SK-N-SH (cell line): ENCODE measurements at regions of chr2 and their contacts with region 1.

Region 1: DNA sequence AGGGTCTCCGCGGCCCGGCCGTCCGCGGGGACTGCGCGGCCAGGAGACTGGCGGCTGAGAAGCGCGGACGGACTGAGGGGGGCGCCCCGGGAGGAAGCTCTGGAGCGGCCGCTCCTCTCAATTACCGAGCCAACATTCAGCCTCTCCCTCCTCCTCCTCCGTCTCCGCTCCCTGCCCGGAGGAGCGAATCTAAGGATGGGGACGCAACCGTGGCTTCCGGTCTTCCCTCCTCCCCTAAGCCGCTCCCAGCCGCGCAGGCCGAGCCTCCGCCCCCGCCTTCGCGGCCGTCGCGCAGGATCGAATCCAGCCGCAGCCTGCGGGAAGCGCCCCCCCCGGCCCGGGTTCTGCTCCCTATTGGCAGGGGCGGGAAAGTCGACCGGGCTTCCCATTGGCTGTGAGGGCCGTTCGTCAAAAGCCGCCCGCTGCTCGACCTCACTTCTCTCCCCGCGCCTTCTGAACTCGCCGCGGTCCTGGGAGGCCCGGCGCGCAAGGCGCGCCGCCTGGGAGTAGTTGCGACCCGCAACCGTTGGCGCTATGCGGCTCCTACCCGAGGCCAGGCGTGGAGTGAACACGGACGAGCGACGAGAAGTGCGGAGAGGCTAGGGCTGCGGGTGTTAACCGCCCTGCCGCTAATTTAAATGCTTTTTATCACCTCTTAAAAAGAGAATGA is at the start of gene HNRNPLL:
- DNase-seq: peak; percentile 100
- H3K4me3 ChIP-seq: peak within 1 kb of the TSS; percentile 90 to 94
- H3K27ac ChIP-seq: peak within 1 kb of the TSS; percentile 92 to 96
- H3K4me1 ChIP-seq: peaks cover 9 to 19% of the 10 kb centered on the region in 2 experiments
- H3K27me3 ChIP-seq: no peaks in the 10 kb centered on the region
- CTCF ChIP-seq: peak; percentile 19
- EP300 ChIP-seq: peak; percentile 6 to 31; a peak in 1 of 4 replicates
- RAD21 ChIP-seq: no peak
- polyA plus RNA-seq, gene HNRNPLL: 24.4 and 29.8 TPM in 2 replicates

Region 2: DNA sequence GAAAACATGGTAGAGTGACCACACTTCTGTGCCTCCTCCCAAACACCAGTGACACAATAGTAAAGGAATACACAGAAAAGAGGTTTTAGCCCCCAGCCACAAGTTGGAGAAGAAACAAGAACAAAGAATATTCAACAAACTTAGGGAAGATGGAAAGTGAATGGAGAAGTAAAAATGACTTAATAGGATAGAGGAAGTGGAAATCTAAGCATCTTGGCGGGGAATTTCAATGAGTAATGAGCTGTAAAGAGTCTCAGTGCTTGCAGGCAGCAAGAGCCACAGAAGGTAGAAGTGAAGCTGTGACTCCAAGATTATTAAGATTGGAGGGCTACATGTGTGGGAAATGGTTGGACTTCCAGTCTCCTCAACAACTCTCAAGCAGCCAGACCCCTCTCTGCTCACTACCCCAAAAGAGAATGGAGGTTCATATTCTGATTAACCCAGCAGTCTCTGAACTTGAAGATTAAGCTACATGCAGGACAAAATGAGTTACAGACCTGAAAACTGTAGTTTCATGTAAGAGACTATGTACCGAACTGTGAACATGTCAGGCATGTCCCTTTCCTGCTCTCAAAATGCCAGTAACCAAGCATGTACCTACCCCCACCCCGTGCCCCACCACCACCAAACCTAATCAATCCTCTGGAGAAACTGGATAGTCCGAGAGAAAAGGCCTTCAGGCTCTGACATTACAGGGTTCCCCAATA is 16.7 kb after region 1 on chr2:
- CTCF ChIA-PET with region 1: interaction called, 54 read pairs
- POLR2A ChIA-PET with region 1: no interaction called
- DNase-seq: no peak
- H3K4me3 ChIP-seq: no peak overlapping the region
- H3K27ac ChIP-seq: peak overlapping the region in 1 of 2 experiments; percentile 26; a peak in 1 of 4 replicates
- H3K4me1 ChIP-seq: no peaks in the 10 kb centered on the region
- H3K27me3 ChIP-seq: no peaks in the 10 kb centered on the region
- CTCF ChIP-seq: no peak
- EP300 ChIP-seq: no peak
- RAD21 ChIP-seq: no peak

Region 3: GRCh38 chr2:38626326-38627035 is 23.6 kb after region 1 on chr2:
- CTCF ChIA-PET with region 1: interaction called, 22 read pairs
- POLR2A ChIA-PET with region 1: no interaction called
- DNase-seq: no peak
- H3K4me3 ChIP-seq: no peak overlapping the region
- H3K27ac ChIP-seq: no peak overlapping the region
- H3K4me1 ChIP-seq: no peaks in the 10 kb centered on the region
- H3K27me3 ChIP-seq: no peaks in the 10 kb centered on the region
- CTCF ChIP-seq: no peak
- EP300 ChIP-seq: no peak
- RAD21 ChIP-seq: no peak

Region 4: GRCh38 chr2:38720613-38721241 is 117.9 kb after region 1 on chr2:
- CTCF ChIA-PET with region 1: interaction called, 47 read pairs
- POLR2A ChIA-PET with region 1: no interaction called
- DNase-seq: no peak
- H3K4me3 ChIP-seq: no peak overlapping the region
- H3K27ac ChIP-seq: peak overlapping the region in 1 of 2 experiments; percentile 3; a peak in 1 of 4 replicates
- H3K4me1 ChIP-seq: no peaks in the 10 kb centered on the region
- H3K27me3 ChIP-seq: no peaks in the 10 kb centered on the region
- CTCF ChIP-seq: no peak
- EP300 ChIP-seq: no peak
- RAD21 ChIP-seq: no peak

Region 5: DNA sequence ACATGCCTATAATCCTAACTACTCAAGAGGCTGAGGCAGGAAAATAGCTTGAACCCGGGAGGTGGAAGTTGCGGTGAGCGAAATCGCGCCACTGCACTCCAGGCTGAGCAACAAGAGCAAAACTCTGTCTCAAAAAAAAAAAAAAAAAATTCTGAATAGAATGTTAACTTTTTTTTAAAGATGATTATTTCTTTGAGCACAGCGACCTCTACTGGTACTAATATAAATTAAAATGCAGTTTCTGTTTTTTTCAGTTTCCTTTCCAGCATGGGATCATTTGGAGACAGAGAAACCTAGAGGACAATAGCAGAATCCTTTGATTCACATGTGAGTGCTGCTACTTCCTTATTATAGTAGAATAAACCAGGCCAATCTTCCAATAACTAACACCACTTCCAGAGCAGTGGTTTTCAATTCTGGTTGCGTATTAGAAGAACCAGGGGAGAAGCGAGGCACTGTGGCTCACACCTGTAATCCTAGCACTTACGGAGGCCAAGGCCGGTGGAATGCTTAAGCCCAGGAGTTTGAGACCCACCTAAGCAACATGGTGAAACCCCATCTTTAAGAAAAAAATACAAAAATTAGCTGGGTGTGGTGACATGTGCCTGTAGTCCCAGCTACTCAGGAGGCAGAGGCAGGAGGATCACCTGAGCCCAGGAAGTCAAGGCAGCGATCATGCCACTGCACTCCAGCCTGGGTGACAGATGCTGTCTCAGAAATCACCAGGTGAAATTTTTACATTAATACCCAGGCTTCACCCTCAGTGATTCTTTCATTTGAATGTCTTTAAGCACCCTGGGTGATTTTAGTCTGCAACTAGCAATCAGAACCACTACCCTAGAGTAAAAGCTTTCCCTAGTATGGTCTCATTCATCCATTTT is 138.2 kb after region 1 on chr2:
- CTCF ChIA-PET with region 1: interaction called, 10 read pairs
- POLR2A ChIA-PET with region 1: interaction called, 3 read pairs
- DNase-seq: peak; percentile 50
- H3K4me3 ChIP-seq: no peak overlapping the region
- H3K27ac ChIP-seq: peak overlapping the region in 1 of 2 experiments; percentile 23; a peak in 2 of 4 replicates
- H3K4me1 ChIP-seq: peaks cover 2 to 19% of the 10 kb centered on the region in 2 experiments
- H3K27me3 ChIP-seq: no peaks in the 10 kb centered on the region
- CTCF ChIP-seq: peak; percentile 75
- EP300 ChIP-seq: no peak
- RAD21 ChIP-seq: peak; percentile 56

Region 6: DNA sequence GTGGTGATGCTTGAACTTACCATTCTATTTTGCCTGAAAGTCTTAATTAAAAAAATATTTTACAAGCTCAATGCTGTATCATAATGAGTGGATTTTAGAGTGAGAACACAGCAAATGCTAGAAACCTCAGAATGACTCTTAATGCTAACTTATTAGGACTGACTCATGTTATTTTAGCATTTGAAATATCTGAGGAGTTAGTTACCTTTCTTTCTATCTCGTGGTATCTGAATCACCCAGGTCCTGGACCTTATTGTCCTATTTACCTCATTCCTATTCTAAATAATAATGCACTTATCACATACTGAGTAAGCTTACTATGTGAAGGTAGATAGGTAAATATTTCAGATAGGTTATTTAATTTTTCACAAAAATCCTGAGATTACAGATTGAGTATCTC is 447.2 kb after region 1 on chr2:
- CTCF ChIA-PET with region 1: no interaction called
- POLR2A ChIA-PET with region 1: no interaction called
- DNase-seq: no peak
- H3K4me3 ChIP-seq: no peak overlapping the region
- H3K27ac ChIP-seq: no peak overlapping the region
- H3K4me1 ChIP-seq: no peaks in the 10 kb centered on the region
- H3K27me3 ChIP-seq: no peaks in the 10 kb centered on the region
- CTCF ChIP-seq: no peak
- EP300 ChIP-seq: no peak
- RAD21 ChIP-seq: no peak